GM10248 (cell line): ENCODE measurements at regions of chr4 and their contacts with region 1.

Region 1: GRCh38 chr4:104064646-104065577 is 345.1 kb upstream of the TACR3 start:
- DNase-seq: peak; percentile 11
- CTCF ChIP-seq: no peak

Region 2: GRCh38 chr4:104022831-104023230 is 42.1 kb before region 1 on chr4:
- CTCF ChIA-PET with region 1: no interaction called
- POLR2A ChIA-PET with region 1: no interaction called
- DNase-seq: no peak
- CTCF ChIP-seq: no peak

Region 3: GRCh38 chr4:104044369-104044768 is 20.5 kb before region 1 on chr4:
- CTCF ChIA-PET with region 1: interaction called, 10 read pairs
- POLR2A ChIA-PET with region 1: no interaction called
- DNase-seq: no peak
- CTCF ChIP-seq: no peak